Heart left ventricle (tissue), 16 donors: ENCODE measurements at regions of chr15 and their contacts with region 1.

Region 1: GRCh38 chr15:45457641-45458433 is 64.7 kb downstream of the SLC30A4 start:
- DNase-seq: peak in 4 of 5 donors; percentile 48 to 72 (median 60)
- ATAC-seq: peak; percentile 64 to 85 (median 76)
- H3K4me3 ChIP-seq: peak overlapping the region; percentile 5 to 65 (median 54)
- H3K27ac ChIP-seq: peak overlapping the region in 11 of 12 donors; percentile 44 to 81 (median 69)
- H3K4me1 ChIP-seq: peaks cover 0 to 49% (median 0%) of the 10 kb centered on the region in 12 donors
- H3K27me3 ChIP-seq: no peaks in the 10 kb centered on the region
- CTCF ChIP-seq: peak; percentile 62 to 80 (median 76)
- POLR2A ChIP-seq: no peak

Region 2: GRCh38 chr15:45166834-45167630 is 290.8 kb before region 1 on chr15:
- intact Hi-C with region 1: loop called in 5 of 10 experiments (anchors 1 to 10 kb)
- DNase-seq: peak; percentile 85 to 93 (median 91)
- ATAC-seq: peak; percentile 67 to 87 (median 85)
- H3K4me3 ChIP-seq: peak overlapping the region; percentile 59 to 93 (median 76)
- H3K27ac ChIP-seq: peak overlapping the region; percentile 94 to 100 (median 99)
- H3K4me1 ChIP-seq: peaks cover 0 to 31% (median 14%) of the 10 kb centered on the region in 12 donors
- H3K27me3 ChIP-seq: no peaks in the 10 kb centered on the region
- CTCF ChIP-seq: peak; percentile 32 to 70 (median 58)
- POLR2A ChIP-seq: peak in 1 of 2 donors; percentile 39

Region 3: DNA sequence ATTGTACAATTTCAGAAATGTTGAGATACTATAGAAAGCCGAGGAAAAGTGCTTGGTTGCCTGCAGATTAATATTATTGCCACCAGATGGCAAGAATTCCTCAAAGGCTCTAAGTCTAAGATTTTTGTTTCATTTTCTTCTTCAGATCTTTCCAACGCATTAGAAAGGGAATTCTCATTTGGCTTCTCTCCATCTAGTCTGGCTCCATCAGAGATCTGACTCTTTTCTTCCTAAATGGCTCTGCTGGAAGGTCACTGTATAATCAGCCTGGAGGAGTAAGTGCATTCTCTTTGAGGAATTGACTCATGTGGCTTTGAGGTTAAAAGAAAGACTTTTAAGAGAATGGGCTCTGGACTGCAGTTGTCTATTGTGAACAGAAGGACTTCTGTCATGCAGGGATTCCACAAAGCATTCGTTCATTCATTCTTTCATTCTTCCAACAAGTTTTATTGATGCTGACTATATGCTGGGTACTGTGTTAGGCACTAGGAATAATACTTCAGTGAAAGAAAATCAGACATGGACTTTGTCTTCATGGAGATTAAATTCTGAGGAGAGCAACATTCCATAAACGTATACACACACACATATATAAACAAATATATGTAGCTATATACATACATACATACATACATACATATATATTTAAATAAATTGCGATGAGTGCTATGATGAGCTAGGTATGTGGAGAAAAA is 150.5 kb before region 1 on chr15:
- intact Hi-C with region 1: loop called in 3 of 10 experiments (anchors 5 kb)
- DNase-seq: no peak
- ATAC-seq: peak in 2 of 4 donors; percentile 54 to 68
- H3K4me3 ChIP-seq: peak overlapping the region in 7 of 12 donors; percentile 27 to 45 (median 33)
- H3K27ac ChIP-seq: peak overlapping the region in 2 of 12 donors; percentile 28 to 37
- H3K4me1 ChIP-seq: peaks cover 0 to 12% (median 3%) of the 10 kb centered on the region in 12 donors
- H3K27me3 ChIP-seq: peaks cover 0 to 4% (median 0%) of the 10 kb centered on the region in 9 donors
- CTCF ChIP-seq: peak; percentile 38 to 78 (median 60)
- POLR2A ChIP-seq: no peak

Region 4: DNA sequence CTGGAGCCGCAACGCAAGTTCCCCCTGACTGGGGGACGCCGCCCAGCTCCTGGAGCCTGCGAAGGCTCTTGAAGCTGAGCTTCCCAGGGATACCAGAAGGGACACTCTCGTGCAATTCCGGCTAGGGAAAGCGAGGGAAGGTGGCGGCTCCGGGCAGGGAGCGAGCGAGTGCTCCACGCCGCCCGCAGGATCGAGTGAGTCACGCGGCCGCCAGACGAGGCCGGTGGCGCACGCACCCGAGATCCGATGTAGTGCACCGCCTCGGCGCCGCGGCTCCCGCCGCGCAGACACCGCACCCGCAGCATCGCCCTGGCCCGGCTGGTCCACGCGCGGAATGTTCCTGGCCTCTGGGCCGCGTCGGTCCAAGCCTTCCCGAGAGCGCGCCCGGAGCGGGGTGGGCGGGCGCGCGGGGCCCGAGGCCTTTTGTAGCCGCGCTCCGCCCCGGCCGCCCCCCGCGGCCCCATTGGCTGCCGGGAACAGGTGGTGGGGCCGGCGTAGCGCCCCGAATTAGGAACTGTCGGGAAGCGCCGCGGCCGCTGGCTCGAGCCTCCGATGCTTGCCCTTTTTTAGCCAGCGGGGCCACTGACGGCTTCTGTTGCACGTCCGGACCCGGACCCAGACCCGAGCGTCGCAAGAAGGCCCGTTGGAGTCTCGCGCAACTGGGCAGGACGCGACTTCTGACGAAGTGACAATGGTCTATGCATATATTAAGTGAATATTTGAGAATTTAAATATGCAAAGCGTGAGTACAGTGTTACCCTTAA is 79.5 kb before region 1 on chr15 and contains the start of gene GATM:
- intact Hi-C with region 1: no loop called
- DNase-seq: peak; percentile 83 to 92 (median 88)
- ATAC-seq: peak; percentile 84 to 95 (median 92)
- H3K4me3 ChIP-seq: peak within 1 kb of the TSS; percentile 42 to 74 (median 66)
- H3K27ac ChIP-seq: peak within 1 kb of the TSS; percentile 70 to 91 (median 82)
- H3K4me1 ChIP-seq: peaks cover 0 to 39% (median 19%) of the 10 kb centered on the region in 12 donors
- H3K27me3 ChIP-seq: peaks cover 0 to 35% (median 0%) of the 10 kb centered on the region in 9 donors
- CTCF ChIP-seq: peak in 11 of 12 donors; percentile 14 to 67 (median 40)
- POLR2A ChIP-seq: peak in 1 of 2 donors; percentile 95
- total RNA-seq, gene GATM: 12.9 to 121 (median 29.7) TPM

Region 5: GRCh38 chr15:45429974-45430792 is 27.7 kb before region 1 on chr15:
- intact Hi-C with region 1: loop called in 4 of 10 experiments (anchors 1 to 2 kb)
- DNase-seq: peak; percentile 49 to 87 (median 68)
- ATAC-seq: peak in 3 of 4 donors; percentile 64 to 76 (median 72)
- H3K4me3 ChIP-seq: peak overlapping the region in 10 of 12 donors; percentile 2 to 60 (median 44)
- H3K27ac ChIP-seq: no peak overlapping the region
- H3K4me1 ChIP-seq: peaks cover 0 to 9% (median 4%) of the 10 kb centered on the region in 12 donors
- H3K27me3 ChIP-seq: peaks cover 0 to 10% (median 0%) of the 10 kb centered on the region in 9 donors
- CTCF ChIP-seq: peak; percentile 91 to 100 (median 98)
- POLR2A ChIP-seq: no peak

Region 6: GRCh38 chr15:45611305-45611704 is 153.5 kb after region 1 on chr15:
- intact Hi-C with region 1: loop called (anchors 1 to 5 kb)
- DNase-seq: no peak
- ATAC-seq: no peak
- H3K4me3 ChIP-seq: no peak overlapping the region
- H3K27ac ChIP-seq: no peak overlapping the region
- H3K4me1 ChIP-seq: peaks cover 0 to 4% (median 0%) of the 10 kb centered on the region in 12 donors
- H3K27me3 ChIP-seq: no peaks in the 10 kb centered on the region
- CTCF ChIP-seq: peak in 10 of 12 donors; percentile 13 to 47 (median 30)
- POLR2A ChIP-seq: no peak